Breast epithelium (tissue), 4 donors: ENCODE measurements at regions of chr11 and their contacts with region 1.

Region 1: GRCh38 chr11:66336234-66337102 is at the start of gene RIN1:
- DNase-seq: peak in 1 of 2 donors; percentile 77
- H3K4me3 ChIP-seq: peak within 1 kb of the TSS; percentile 68 to 80 (median 70)
- H3K27ac ChIP-seq: peak within 1 kb of the TSS; percentile 66 to 83
- H3K4me1 ChIP-seq: peaks cover 0 to 8% of the 10 kb centered on the region in 2 donors
- H3K27me3 ChIP-seq: no peaks in the 10 kb centered on the region
- CTCF ChIP-seq: peak in 1 of 3 donors; percentile 20
- POLR2A ChIP-seq: peak; percentile 20
- total RNA-seq, gene RIN1: 3.2 to 6.6 (median 5.2) TPM

Region 2: GRCh38 chr11:66258473-66258893 is 78.0 kb before region 1 on chr11:
- intact Hi-C with region 1: loop called (anchors 1 kb)
- DNase-seq: no peak
- H3K4me3 ChIP-seq: peak overlapping the region; percentile 90 to 99 (median 95)
- H3K27ac ChIP-seq: peak overlapping the region; percentile 80 to 83
- H3K4me1 ChIP-seq: no peaks in the 10 kb centered on the region
- H3K27me3 ChIP-seq: no peaks in the 10 kb centered on the region
- CTCF ChIP-seq: peak in 1 of 3 donors; percentile 3
- POLR2A ChIP-seq: no peak

Region 3: GRCh38 chr11:66653123-66653522 is 316.7 kb after region 1 on chr11:
- intact Hi-C with region 1: no loop called
- DNase-seq: no peak
- H3K4me3 ChIP-seq: no peak overlapping the region
- H3K27ac ChIP-seq: no peak overlapping the region
- H3K4me1 ChIP-seq: no peaks in the 10 kb centered on the region
- H3K27me3 ChIP-seq: no peaks in the 10 kb centered on the region
- CTCF ChIP-seq: no peak
- POLR2A ChIP-seq: no peak